GM12878 (cell line): ENCODE measurements at regions of chr7 and their contacts with region 1.

Region 1: GRCh38 chr7:158976849-158977593 is 120.7 kb downstream of the DYNC2I1 start:
- DNase-seq: peak; percentile 71
- ATAC-seq: peak; percentile 93
- H3K4me3 ChIP-seq: peak overlapping the region; percentile 59
- H3K27ac ChIP-seq: peak overlapping the region; percentile 52
- H3K4me1 ChIP-seq: peaks cover 16% of the 10 kb centered on the region
- H3K27me3 ChIP-seq: no peaks in the 10 kb centered on the region
- CTCF ChIP-seq: peak; percentile 84 to 94 (median 90); a peak in 5 of 6 replicates
- EP300 ChIP-seq: peak in 1 of 2 experiments; percentile 37; a peak in 1 of 4 replicates
- POLR2A ChIP-seq: no peak
- RAD21 ChIP-seq: peak; percentile 84

Region 2: GRCh38 chr7:157432957-157433576 is 1544.0 kb before region 1 on chr7:
- CTCF ChIA-PET with region 1: interaction called, 3 read pairs
- POLR2A ChIA-PET with region 1: no interaction called
- RAD21 ChIA-PET with region 1: interaction called, 4 read pairs
- SMC1A ChIA-PET with region 1: no interaction called
- in situ Hi-C with region 1: no loop called
- intact Hi-C with region 1: loop called (anchors 2 kb)
- DNase-seq: no peak
- ATAC-seq: peak; percentile 81
- H3K4me3 ChIP-seq: no peak overlapping the region
- H3K27ac ChIP-seq: no peak overlapping the region
- H3K4me1 ChIP-seq: no peaks in the 10 kb centered on the region
- H3K27me3 ChIP-seq: no peaks in the 10 kb centered on the region
- CTCF ChIP-seq: peak; percentile 63 to 69 (median 68); a peak in 5 of 6 replicates
- EP300 ChIP-seq: no peak
- POLR2A ChIP-seq: no peak
- RAD21 ChIP-seq: peak; percentile 64

Region 3: DNA sequence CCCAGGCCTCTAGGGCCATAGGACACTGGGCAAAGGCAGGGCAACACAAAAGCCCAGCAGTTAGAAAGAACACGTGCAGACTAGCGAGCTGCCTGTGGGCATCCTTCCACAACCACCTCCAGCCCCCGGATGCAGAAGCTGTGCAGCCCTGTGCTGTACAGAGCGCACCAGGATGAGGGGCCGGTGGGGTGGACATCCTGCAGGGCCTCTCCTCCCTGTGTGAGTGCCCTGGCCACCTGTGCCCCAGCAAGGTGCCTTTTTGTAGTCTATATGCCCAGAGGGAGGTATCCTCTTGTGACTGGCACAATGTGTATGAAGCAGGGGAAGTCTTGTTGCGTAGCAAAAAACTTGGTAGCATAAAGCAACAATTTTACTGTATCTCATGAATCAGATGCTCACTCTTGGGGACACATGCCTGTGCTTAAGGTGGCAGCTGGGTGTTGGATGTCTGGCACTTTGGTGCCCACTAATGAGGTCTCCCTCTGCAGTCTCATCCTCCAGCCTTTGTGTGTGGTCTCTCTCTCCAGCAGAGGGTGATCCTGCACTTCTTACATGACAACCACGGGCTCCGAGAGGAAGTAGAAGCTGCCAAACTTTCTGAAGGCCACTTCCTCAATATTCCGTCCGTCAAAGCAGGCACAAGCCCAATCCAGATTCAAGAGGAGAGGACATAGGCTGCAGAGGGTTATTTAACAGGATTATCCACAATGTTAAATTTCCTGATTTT is 281.1 kb before region 1 on chr7:
- CTCF ChIA-PET with region 1: interaction called, 78 read pairs
- POLR2A ChIA-PET with region 1: interaction called, 3 read pairs
- RAD21 ChIA-PET with region 1: interaction called, 59 read pairs
- SMC1A ChIA-PET with region 1: interaction called, 62 read pairs
- in situ Hi-C with region 1: loop called (anchors 5 kb)
- intact Hi-C with region 1: loop called (anchors 1 kb)
- DNase-seq: peak; percentile 28
- ATAC-seq: peak; percentile 78
- H3K4me3 ChIP-seq: no peak overlapping the region
- H3K27ac ChIP-seq: no peak overlapping the region
- H3K4me1 ChIP-seq: no peaks in the 10 kb centered on the region
- H3K27me3 ChIP-seq: no peaks in the 10 kb centered on the region
- CTCF ChIP-seq: peak; percentile 50 to 72 (median 68); a peak in 5 of 6 replicates
- EP300 ChIP-seq: no peak
- POLR2A ChIP-seq: no peak
- RAD21 ChIP-seq: peak; percentile 69

Region 4: DNA sequence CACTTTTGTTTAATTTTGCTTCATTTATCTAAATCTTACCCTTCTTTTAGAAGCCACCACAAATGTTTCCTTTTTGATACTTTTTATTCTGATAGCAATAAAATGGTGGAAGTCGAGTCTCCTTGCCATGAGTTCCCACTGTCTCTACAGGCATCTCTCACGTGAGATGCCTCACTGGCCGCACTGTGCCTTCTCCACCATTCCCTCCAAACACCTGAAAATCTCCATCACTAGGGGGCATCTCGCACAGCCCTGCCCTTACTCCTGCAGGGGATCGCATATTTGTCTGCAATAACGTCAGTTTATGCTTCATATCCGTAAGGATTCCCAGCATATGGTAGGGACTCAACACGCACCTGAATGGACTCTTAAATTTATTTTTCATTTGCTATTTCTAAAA is 216.1 kb before region 1 on chr7:
- CTCF ChIA-PET with region 1: interaction called, 8 read pairs
- POLR2A ChIA-PET with region 1: no interaction called
- RAD21 ChIA-PET with region 1: interaction called, 9 read pairs
- SMC1A ChIA-PET with region 1: interaction called, 3 read pairs
- in situ Hi-C with region 1: no loop called
- intact Hi-C with region 1: loop called (anchors 5 kb)
- DNase-seq: no peak
- ATAC-seq: no peak
- H3K4me3 ChIP-seq: no peak overlapping the region
- H3K27ac ChIP-seq: no peak overlapping the region
- H3K4me1 ChIP-seq: no peaks in the 10 kb centered on the region
- H3K27me3 ChIP-seq: no peaks in the 10 kb centered on the region
- CTCF ChIP-seq: peak in 2 of 3 experiments; percentile 3 to 15; a peak in 1 of 6 replicates
- EP300 ChIP-seq: no peak
- POLR2A ChIP-seq: no peak
- RAD21 ChIP-seq: peak; percentile 22; the same call in 1 of the 2 replicates

Region 5: DNA sequence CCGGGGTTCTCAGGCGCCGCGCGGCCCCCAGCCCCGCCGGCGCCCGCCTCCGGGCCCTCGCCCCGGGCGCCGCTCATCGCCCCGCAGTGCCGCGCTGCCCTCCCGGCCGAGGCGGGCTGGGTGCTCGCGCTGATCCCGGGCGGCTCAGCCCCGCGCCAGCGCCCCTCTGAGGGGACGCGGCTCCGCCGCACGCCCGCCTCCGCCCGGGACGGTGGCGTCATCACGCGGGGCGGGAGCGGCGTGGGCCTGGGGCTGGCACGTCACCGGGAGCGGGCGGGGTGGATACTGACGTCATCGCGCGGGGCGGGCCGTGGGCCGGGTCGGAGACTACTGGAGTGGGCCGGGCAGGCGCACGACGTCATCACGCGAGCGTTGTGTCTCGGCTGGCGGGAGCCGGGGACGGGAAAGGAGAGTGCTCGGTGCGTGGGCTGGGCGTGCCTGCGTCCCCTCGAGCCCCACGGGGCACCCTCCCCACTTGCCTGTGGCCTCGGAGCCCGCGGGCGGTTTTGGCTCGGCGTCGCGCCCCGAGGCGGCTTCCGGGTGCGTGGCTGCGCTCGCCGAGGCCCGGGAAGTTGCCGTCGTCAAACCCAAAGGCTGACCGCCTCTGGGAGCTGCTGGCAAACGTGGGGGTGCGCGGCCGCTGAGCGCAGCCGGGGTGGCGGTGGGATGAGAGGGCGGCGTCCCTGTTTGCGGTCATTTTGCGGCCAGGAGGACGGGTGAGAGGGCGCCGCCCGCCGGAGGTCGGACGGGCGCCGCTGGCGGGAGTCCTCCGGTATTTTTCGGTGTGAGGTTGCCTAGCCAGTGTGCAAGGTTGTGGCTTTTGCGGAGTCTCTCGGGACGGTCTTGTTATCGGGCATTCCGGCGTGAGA is 147.4 kb before region 1 on chr7 and contains the start of gene ESYT2:
- CTCF ChIA-PET with region 1: interaction called, 14 read pairs
- POLR2A ChIA-PET with region 1: no interaction called
- RAD21 ChIA-PET with region 1: interaction called, 27 read pairs
- SMC1A ChIA-PET with region 1: interaction called, 3 read pairs
- in situ Hi-C with region 1: no loop called
- intact Hi-C with region 1: loop called (anchors 1 kb)
- DNase-seq: peak; percentile 82
- ATAC-seq: peak; percentile 84
- H3K4me3 ChIP-seq: peak within 1 kb of the TSS; percentile 80
- H3K27ac ChIP-seq: peak within 1 kb of the TSS; percentile 85
- H3K4me1 ChIP-seq: peaks cover 8% of the 10 kb centered on the region
- H3K27me3 ChIP-seq: no peaks in the 10 kb centered on the region
- CTCF ChIP-seq: peak in 2 of 3 experiments; percentile 10 to 16; a peak in 1 of 6 replicates
- EP300 ChIP-seq: peak in 1 of 2 experiments; percentile 40; a peak in 1 of 4 replicates
- POLR2A ChIP-seq: peak; percentile 93
- RAD21 ChIP-seq: 0 out of 2 replicates have a peak, but pooled peaks have one; percentile 4
- polyA plus RNA-seq, gene ESYT2: 1.9 to 3.2 TPM

Region 6: GRCh38 chr7:158885624-158886023 is 91.4 kb before region 1 on chr7:
- CTCF ChIA-PET with region 1: interaction called, 25 read pairs
- POLR2A ChIA-PET with region 1: no interaction called
- RAD21 ChIA-PET with region 1: interaction called, 17 read pairs
- SMC1A ChIA-PET with region 1: interaction called, 11 read pairs
- in situ Hi-C with region 1: no loop called
- intact Hi-C with region 1: loop called (anchors 2 kb)
- DNase-seq: no peak
- ATAC-seq: no peak
- H3K4me3 ChIP-seq: no peak overlapping the region
- H3K27ac ChIP-seq: no peak overlapping the region
- H3K4me1 ChIP-seq: no peaks in the 10 kb centered on the region
- H3K27me3 ChIP-seq: no peaks in the 10 kb centered on the region
- CTCF ChIP-seq: peak in 2 of 3 experiments; percentile 24 to 30; a peak in 2 of 6 replicates
- EP300 ChIP-seq: no peak
- POLR2A ChIP-seq: no peak
- RAD21 ChIP-seq: peak; percentile 48